K562 (cell line): ENCODE measurements at regions of chr17 and their contacts with region 1.

Region 1: DNA sequence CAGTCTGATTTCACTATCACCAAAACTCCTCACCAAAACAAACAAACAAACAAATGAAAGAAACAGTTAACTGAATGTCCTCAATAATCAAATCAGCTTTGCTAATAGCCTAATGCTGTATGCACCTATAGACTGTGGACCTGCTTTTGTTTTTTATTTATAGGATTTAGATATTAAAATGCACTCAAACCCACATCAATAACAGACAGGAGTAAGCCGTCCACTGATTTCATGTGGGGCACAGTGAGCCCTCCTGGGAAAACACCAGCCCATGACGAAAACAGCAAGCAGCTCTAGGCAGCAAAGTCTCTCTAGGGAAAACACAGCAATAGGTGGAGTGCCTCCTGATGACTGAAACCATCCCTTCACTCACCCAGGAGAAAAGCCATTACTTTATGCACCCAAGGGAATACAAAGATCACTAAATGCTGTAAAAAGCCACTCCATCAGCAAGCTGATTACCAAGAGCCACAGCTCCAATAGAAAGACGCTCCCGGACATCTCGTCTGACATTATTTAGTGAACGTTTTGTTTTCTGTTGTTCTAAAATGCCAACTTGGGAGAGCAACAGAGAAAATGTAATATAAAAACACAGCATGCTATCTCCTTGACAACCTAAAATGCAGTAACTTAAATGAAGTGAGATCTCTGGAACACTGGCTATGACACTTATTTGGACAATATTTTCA is 47.8 kb downstream of the ANKFY1 start:
- DNase-seq: no peak
- ATAC-seq: no peak
- H3K4me3 ChIP-seq: no peak overlapping the region
- H3K27ac ChIP-seq: no peak overlapping the region
- H3K4me1 ChIP-seq: no peaks in the 10 kb centered on the region; a peak in 1 of 5 replicates
- H3K27me3 ChIP-seq: no peaks in the 10 kb centered on the region
- CTCF ChIP-seq: no peak
- EP300 ChIP-seq: no peak
- POLR2A ChIP-seq: no peak
- RAD21 ChIP-seq: no peak

Region 2: DNA sequence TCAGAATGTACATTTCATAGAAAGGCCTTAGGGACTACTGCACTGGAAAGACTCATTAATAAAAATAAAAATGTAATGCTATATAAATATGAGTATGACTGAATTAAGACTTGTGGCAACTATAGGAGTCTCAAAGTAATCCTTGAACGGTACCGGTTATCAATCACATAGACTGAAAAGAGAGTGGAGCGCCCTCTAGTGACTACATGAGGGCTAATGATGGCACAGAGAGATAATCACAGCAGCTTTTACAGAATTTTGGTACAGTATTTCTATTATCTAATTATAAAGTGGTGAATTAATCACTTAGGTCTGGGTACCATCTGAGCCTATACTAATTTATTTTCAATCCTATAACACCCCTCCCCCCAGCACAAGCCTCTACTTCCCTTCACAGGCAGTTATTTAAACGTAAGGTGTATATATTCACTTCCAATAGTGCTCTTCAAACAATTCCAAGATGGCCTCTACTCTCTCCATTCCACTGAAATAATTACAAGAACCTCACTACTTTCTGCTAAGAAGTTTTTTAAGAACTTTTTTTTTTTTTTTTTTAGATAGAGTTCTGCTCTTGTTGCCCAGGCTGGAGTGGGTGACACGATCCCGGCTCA is 88.5 kb after region 1 on chr17:
- CTCF ChIA-PET with region 1: no interaction called
- POLR2A ChIA-PET with region 1: no interaction called
- in situ Hi-C with region 1: no loop called
- intact Hi-C with region 1: loop called (anchors 5 kb)
- DNase-seq: peak; percentile 55 to 66 (median 62)
- ATAC-seq: peak; percentile 77
- H3K4me3 ChIP-seq: no peak overlapping the region
- H3K27ac ChIP-seq: no peak overlapping the region
- H3K4me1 ChIP-seq: no peaks in the 10 kb centered on the region; a peak in 2 of 5 replicates
- H3K27me3 ChIP-seq: no peaks in the 10 kb centered on the region
- CTCF ChIP-seq: peak; percentile 47 to 65 (median 65); a peak in 5 of 6 replicates
- EP300 ChIP-seq: no peak
- POLR2A ChIP-seq: no peak
- RAD21 ChIP-seq: peak in 1 of 2 experiments; percentile 45; a peak in 2 of 4 replicates

Region 3: GRCh38 chr17:4366327-4367063 is 150.5 kb after region 1 on chr17 and contains the start of gene UBE2G1:
- CTCF ChIA-PET with region 1: interaction called, 4 read pairs
- POLR2A ChIA-PET with region 1: no interaction called
- in situ Hi-C with region 1: no loop called
- intact Hi-C with region 1: loop called (anchors 1 kb)
- DNase-seq: peak; percentile 93 to 96 (median 94)
- ATAC-seq: peak; percentile 93
- H3K4me3 ChIP-seq: peak within 1 kb of the TSS; percentile 91
- H3K27ac ChIP-seq: peak within 1 kb of the TSS; percentile 90
- H3K4me1 ChIP-seq: peaks cover 2 to 25% of the 10 kb centered on the region in 2 experiments; a peak in 3 of 5 replicates
- H3K27me3 ChIP-seq: no peaks in the 10 kb centered on the region
- CTCF ChIP-seq: peak; percentile 53 to 72 (median 67)
- EP300 ChIP-seq: no peak
- POLR2A ChIP-seq: peak; percentile 79
- RAD21 ChIP-seq: peak; percentile 71 to 88
- polyA plus RNA-seq, gene UBE2G1: 10.1 to 16.4 TPM

Region 4: DNA sequence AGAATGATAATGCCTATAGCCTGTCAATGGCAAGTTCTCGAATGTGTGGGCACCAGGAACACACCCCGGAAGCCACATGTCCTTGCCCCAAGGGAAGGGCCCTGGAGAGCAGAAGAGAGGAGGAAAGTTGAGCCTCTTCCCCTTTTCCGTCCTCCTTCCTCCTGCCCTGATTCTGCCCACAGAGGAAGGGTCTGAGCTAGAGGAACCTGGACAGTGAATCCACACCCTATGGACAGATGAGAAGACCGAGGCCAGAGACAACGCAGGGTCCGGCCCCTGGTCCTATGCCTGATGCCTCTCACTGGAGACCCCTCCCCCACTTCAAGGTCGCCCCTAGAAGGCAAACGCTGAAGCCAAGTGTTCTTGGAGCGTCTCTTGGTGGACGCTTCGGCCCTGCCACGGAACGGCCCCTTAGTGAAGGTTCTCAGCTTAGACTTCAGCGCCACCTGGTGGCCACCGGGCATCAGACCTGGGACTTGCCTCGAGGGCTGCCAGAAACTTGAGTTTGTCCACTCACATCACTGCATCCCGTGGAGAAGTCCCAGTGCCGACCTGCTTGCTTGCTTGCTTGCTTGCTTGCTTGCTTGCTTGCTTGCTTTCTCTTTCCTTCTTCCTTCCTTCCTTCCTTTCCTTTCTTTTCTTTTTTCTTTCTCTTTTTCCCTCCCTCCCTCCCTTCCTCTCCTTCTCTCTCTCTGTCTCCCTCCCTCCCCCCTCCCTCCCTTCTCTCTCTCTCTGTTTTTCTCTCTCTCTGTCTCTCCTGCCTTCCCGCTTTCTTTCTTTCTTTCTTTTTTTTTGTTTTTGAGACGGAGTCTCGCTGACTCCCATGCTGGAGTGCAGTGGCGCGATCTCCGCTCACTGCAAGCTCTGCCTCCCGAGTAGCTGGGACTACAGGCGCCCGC is 197.2 kb after region 1 on chr17:
- CTCF ChIA-PET with region 1: interaction called, 60 read pairs
- POLR2A ChIA-PET with region 1: interaction called, 6 read pairs
- in situ Hi-C with region 1: no loop called
- intact Hi-C with region 1: loop called (anchors 1 kb)
- DNase-seq: peak; percentile 75 to 89 (median 78)
- ATAC-seq: peak; percentile 99
- H3K4me3 ChIP-seq: no peak overlapping the region
- H3K27ac ChIP-seq: no peak overlapping the region
- H3K4me1 ChIP-seq: peaks cover 0 to 3% of the 10 kb centered on the region in 2 experiments; a peak in 2 of 5 replicates
- H3K27me3 ChIP-seq: no peaks in the 10 kb centered on the region
- CTCF ChIP-seq: peak; percentile 86 to 96 (median 91)
- EP300 ChIP-seq: no peak
- POLR2A ChIP-seq: no peak
- RAD21 ChIP-seq: peak; percentile 78 to 91

Region 5: DNA sequence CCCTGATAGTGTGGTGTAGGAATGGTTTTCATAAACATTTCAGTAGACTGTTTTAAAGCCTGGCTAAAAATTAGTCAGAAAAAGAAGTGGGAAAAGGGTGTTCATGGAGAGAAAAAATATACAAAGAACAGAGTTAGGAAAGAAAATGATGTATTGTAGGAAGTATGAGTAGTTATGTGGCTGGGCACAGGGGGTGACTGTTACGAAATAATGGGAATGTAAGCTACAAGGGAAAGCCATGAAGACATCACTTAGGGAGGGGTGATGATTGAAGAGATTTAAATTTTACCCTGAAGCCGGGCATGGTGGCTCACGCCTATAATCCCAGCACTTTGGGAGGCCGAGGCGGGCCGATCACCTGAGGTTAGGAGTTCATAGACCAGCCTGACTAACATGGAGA is 1148.1 kb after region 1 on chr17:
- CTCF ChIA-PET with region 1: no interaction called
- POLR2A ChIA-PET with region 1: no interaction called
- in situ Hi-C with region 1: no loop called
- intact Hi-C with region 1: no loop called
- DNase-seq: no peak
- ATAC-seq: no peak
- H3K4me3 ChIP-seq: no peak overlapping the region
- H3K27ac ChIP-seq: no peak overlapping the region
- H3K4me1 ChIP-seq: no peaks in the 10 kb centered on the region
- H3K27me3 ChIP-seq: no peaks in the 10 kb centered on the region
- CTCF ChIP-seq: no peak
- EP300 ChIP-seq: no peak
- POLR2A ChIP-seq: no peak
- RAD21 ChIP-seq: no peak